OCI-LY7 (cell line): ENCODE measurements at regions of chr7 and their contacts with region 1.

Region 1: DNA sequence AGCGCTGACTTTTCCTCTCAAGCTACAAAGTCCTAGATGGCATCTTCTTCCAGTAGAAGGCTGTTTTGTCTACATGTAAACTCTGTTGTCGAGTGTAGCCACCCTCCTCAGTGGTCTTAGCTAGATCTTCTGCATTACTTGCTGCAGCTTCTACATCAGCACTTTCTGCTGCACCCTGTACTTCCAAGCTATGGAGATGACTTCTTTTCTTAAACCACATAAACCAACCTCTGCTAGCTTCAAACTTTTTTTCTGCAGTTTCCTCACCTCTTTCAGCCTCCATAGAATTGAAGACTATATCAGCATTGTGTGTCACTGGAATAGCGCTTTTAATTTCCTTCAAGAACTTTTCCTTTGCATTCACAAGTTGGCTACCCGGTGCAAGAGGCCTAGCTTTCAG is 87.8 kb downstream of the LANCL2 start:
- DNase-seq: no peak
- H3K4me3 ChIP-seq: no peak overlapping the region
- H3K27ac ChIP-seq: no peak overlapping the region
- H3K4me1 ChIP-seq: no peaks in the 10 kb centered on the region
- CTCF ChIP-seq: no peak

Region 2: DNA sequence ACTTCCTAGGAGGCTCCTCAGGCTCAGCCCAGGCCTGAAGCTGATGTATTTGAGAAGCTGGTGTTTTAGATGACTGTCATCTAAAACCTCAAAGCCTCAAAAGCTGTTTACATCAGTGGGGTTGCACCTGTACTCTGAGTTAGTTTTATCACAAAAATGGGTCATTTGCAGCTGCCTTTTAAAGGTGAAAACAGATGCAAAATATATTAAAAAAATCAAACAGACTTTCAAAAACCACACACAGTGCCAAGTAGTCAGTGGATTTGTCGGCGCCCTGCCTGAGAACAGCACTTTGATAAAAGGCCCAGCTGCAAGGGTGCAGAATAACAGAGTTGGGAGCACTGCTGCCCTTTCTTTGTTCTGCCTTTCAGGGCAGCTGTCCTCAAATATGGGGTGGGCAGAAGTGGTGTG is 16.3 kb after region 1 on chr7:
- CTCF ChIA-PET with region 1: no interaction called
- POLR2A ChIA-PET with region 1: interaction called, 10 read pairs
- intact Hi-C with region 1: no loop called
- DNase-seq: peak; percentile 75
- H3K4me3 ChIP-seq: no peak overlapping the region
- H3K27ac ChIP-seq: peak overlapping the region; percentile 91
- H3K4me1 ChIP-seq: peaks cover 31% of the 10 kb centered on the region
- CTCF ChIP-seq: no peak

Region 3: DNA sequence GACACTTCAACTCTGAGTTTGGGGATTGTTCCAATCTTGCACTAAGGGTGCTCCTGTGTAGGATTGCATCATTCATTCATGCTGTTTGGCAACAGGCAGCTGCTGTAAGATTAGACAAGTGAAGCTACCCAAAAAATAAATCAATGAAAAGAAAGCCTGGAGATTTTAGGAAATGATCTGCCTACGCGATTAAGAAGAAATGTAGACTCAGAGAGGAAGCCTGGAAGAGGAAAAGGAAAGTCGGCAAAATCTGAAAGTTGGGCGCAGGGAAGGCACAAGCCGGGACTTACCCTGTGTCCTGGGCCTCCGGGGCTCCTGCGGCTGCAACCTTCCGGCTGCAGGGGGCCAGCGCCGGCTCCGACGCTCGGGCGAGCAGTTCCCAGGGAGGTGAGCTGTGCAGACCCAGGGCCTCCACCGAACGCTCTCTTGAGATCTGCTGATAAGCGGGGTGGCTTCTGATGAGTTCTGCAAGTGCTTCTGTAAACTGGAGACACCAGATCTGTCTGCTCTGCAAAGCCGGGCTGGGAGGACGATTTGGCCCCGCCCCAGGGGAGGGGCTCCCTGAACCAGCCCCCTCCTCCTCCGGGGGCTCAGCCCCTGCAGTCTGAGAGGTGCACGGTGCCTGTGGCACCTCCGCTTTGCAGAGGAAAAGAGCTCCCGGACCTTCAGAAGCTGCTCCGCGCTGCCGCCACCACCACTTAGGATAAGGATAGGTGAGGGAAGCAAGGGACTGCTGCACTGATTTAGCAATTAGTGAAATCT is 580.9 kb after region 1 on chr7:
- CTCF ChIA-PET with region 1: no interaction called
- POLR2A ChIA-PET with region 1: no interaction called
- intact Hi-C with region 1: no loop called
- DNase-seq: peak; percentile 85
- H3K4me3 ChIP-seq: peak overlapping the region; percentile 71
- H3K27ac ChIP-seq: peak overlapping the region; percentile 67
- H3K4me1 ChIP-seq: peaks cover 10% of the 10 kb centered on the region
- CTCF ChIP-seq: peak; percentile 51